WTC11 (cell line): ENCODE measurements at regions of chr7 and their contacts with region 1.

Region 1: GRCh38 chr7:92528188-92528957 is at the starts of genes PEX1 and RBM48:
- DNase-seq: peak; percentile 97
- ATAC-seq: peak; percentile 96
- H3K4me3 Mint-ChIP-seq: peak within 1 kb of the TSS; percentile 91
- H3K27ac Mint-ChIP-seq: peak within 1 kb of the TSS; percentile 96
- H3K4me1 Mint-ChIP-seq: peaks cover 18% of the 10 kb centered on the region
- H3K27me3 Mint-ChIP-seq: no peaks in the 10 kb centered on the region
- CTCF ChIP-seq: no peak; the same call in 1 of the 2 replicates
- total RNA-seq, gene PEX1: 24.1 to 25.4 TPM (median 24.9 TPM) in 3 replicates
- total RNA-seq, gene RBM48: 8.0 to 8.6 TPM (median 8.4 TPM) in 3 replicates

Region 2: GRCh38 chr7:92461027-92462003 is 67.1 kb before region 1 on chr7:
- CTCF ChIA-PET with region 1: interaction called, 13 read pairs
- POLR2A ChIA-PET with region 1: no interaction called
- DNase-seq: peak; percentile 33
- ATAC-seq: peak; percentile 85
- H3K4me3 Mint-ChIP-seq: no peak overlapping the region
- H3K27ac Mint-ChIP-seq: no peak overlapping the region
- H3K4me1 Mint-ChIP-seq: 0 out of 2 replicates have a peak, but pooled peaks cover 3% of the 10 kb centered on the region
- H3K27me3 Mint-ChIP-seq: no peaks in the 10 kb centered on the region
- CTCF ChIP-seq: peak; percentile 25; the same call in 1 of the 2 replicates

Region 3: GRCh38 chr7:92588561-92588960 is 60.2 kb after region 1 on chr7:
- CTCF ChIA-PET with region 1: interaction called, 17 read pairs
- POLR2A ChIA-PET with region 1: no interaction called
- DNase-seq: peak; percentile 25
- ATAC-seq: 0 out of 2 replicates have a peak, but pooled peaks have one; percentile 1
- H3K4me3 Mint-ChIP-seq: peak overlapping the region; percentile 92
- H3K27ac Mint-ChIP-seq: no peak overlapping the region
- H3K4me1 Mint-ChIP-seq: peaks cover 18% of the 10 kb centered on the region
- H3K27me3 Mint-ChIP-seq: peaks cover 25% of the 10 kb centered on the region
- CTCF ChIP-seq: no peak

Region 4: GRCh38 chr7:92609921-92610518 is 81.6 kb after region 1 on chr7:
- CTCF ChIA-PET with region 1: interaction called, 12 read pairs
- POLR2A ChIA-PET with region 1: interaction called, 3 read pairs
- DNase-seq: no peak
- ATAC-seq: peak; percentile 29
- H3K4me3 Mint-ChIP-seq: no peak overlapping the region; the same call in 1 of the 2 replicates
- H3K27ac Mint-ChIP-seq: no peak overlapping the region
- H3K4me1 Mint-ChIP-seq: peaks cover 17% of the 10 kb centered on the region
- H3K27me3 Mint-ChIP-seq: no peaks in the 10 kb centered on the region; the same call in 1 of the 2 replicates
- CTCF ChIP-seq: no peak